Esophagus muscularis mucosa (tissue), 4 donors: ENCODE measurements at regions of chr16 and their contacts with region 1.

Region 1: GRCh38 chr16:27455700-27456099 is 53.7 kb downstream of the IL21R start:
- DNase-seq: no peak
- H3K4me3 ChIP-seq: no peak overlapping the region
- H3K27ac ChIP-seq: no peak overlapping the region
- H3K4me1 ChIP-seq: peaks cover 7 to 21% (median 16%) of the 10 kb centered on the region in 4 donors
- H3K27me3 ChIP-seq: peaks cover 0 to under 1% (median 0%) of the 10 kb centered on the region in 4 donors
- CTCF ChIP-seq: no peak
- EP300 ChIP-seq: no peak
- POLR2A ChIP-seq: no peak

Region 2: GRCh38 chr16:27154705-27155521 is 300.8 kb before region 1 on chr16:
- intact Hi-C with region 1: loop called (anchors 2 kb)
- DNase-seq: no peak
- H3K4me3 ChIP-seq: no peak overlapping the region
- H3K27ac ChIP-seq: no peak overlapping the region
- H3K4me1 ChIP-seq: peaks cover 5 to 6% (median 5%) of the 10 kb centered on the region in 4 donors
- H3K27me3 ChIP-seq: no peaks in the 10 kb centered on the region
- CTCF ChIP-seq: peak; percentile 87 to 99 (median 96)
- EP300 ChIP-seq: no peak
- POLR2A ChIP-seq: no peak

Region 3: DNA sequence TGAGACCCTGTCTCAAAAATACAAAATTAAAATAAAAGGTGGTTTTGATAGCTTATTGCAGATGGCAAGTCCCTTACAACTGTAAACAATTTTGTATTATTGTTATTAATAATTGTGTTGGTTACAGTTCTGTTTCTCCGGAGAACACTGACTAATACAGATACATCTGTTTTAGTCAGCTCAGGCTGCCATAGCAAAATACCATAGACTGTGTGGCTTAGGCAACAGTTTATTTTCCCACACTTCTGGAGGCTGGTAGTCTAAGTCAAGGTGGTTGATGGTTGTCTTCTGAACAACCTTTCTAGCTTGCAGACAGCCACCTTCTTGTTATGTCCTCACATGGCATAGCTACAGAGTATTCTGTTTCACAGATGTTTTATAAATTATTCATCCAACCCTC is 68.0 kb before region 1 on chr16:
- intact Hi-C with region 1: no loop called
- DNase-seq: no peak
- H3K4me3 ChIP-seq: no peak overlapping the region
- H3K27ac ChIP-seq: no peak overlapping the region
- H3K4me1 ChIP-seq: no peaks in the 10 kb centered on the region
- H3K27me3 ChIP-seq: peaks cover 0 to 18% (median 1%) of the 10 kb centered on the region in 4 donors
- CTCF ChIP-seq: no peak
- EP300 ChIP-seq: no peak
- POLR2A ChIP-seq: no peak

Region 4: GRCh38 chr16:27511657-27512448 is 56.2 kb after region 1 on chr16:
- intact Hi-C with region 1: no loop called
- DNase-seq: no peak
- H3K4me3 ChIP-seq: no peak overlapping the region
- H3K27ac ChIP-seq: no peak overlapping the region
- H3K4me1 ChIP-seq: peaks cover 0 to 18% (median 8%) of the 10 kb centered on the region in 4 donors
- H3K27me3 ChIP-seq: no peaks in the 10 kb centered on the region
- CTCF ChIP-seq: no peak
- EP300 ChIP-seq: no peak
- POLR2A ChIP-seq: no peak